Right cardiac atrium (tissue), 5 donors: ENCODE measurements at regions of chr5 and their contacts with region 1.

Region 1: DNA sequence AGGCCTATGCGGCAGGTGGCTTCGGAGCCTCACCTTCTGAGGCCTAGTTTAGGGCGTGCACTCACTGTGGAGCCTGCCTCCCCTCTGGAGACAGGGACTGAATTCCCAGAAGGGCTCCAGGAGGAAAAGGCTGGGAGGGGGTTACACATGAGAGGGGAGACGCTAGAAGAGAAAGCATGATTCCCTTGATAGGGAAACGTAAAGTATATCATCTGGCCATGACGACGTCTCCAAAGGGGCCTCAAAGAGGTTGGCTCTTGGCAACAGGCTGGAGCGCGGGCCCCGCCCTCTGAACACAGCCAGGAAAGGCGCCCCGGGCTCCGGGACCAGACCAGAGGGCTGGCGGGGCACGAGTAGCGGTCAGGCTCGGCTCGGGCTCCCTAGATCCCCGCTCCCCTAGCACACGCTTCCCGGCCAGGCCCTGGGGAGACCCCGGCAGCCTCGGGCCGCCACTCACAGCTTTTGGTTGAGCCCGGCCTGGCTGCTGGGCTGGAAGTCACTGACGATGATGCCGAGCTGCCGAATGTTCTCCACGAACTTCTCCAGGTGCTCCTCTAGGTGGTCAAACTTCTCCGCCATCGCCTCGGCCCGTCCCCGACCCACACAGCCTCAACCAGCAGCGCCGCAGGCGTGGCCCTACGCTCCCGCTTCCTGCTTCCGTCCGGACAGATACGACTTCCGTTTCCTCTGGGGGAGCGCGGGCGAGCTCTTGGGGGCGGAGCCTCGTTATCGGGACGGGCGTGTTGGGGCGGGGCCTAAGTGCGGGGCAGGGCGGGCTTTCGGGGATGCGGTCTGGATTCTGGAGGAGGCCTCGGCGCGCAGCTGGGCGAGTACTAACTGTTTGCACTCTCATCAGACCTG is at the start of gene MED10:
- DNase-seq: peak; percentile 97 to 98 (median 98)
- ATAC-seq: peak; percentile 100
- H3K4me3 ChIP-seq: peak within 1 kb of the TSS; percentile 72
- H3K27ac ChIP-seq: peak within 1 kb of the TSS; percentile 69
- H3K4me1 ChIP-seq: peaks cover 4% of the 10 kb centered on the region
- H3K27me3 ChIP-seq: no peaks in the 10 kb centered on the region
- total RNA-seq, gene MED10: 20.0 to 25.1 (median 22.7) TPM

Region 2: DNA sequence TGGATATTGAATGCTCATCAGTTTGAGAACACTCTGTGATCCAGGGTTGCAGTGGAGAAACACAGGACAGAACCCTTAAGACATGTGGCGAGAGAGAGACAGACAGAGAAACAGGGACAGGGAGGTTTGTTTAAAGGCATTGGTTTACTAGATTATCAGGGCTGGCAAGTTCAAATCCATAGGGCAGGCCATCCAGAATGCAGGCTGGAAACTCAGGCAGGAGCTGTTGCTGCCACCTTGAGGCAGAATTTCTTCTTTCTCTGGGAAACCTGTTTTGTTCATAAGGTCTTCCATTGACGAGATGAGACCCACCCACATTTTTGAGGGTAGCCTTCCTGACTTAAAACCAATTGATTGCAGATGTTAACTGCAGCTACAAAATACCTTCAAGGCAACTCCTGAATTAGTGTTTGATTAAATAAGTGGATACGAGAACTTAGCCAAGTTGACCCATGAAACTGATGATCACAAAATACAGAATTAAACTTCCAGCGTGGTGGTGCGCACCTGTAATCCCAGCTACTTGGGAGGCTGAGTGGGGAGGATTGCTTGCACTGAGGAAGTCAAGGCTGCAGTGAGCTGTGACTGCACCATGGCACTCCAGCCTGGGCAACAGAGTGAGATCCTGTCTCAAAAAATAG is 198.8 kb after region 1 on chr5:
- intact Hi-C with region 1: loop called in 1 of 4 experiments (anchors 5 kb)
- DNase-seq: no peak
- ATAC-seq: peak; percentile 34 to 46
- H3K4me3 ChIP-seq: no peak overlapping the region
- H3K27ac ChIP-seq: no peak overlapping the region
- H3K4me1 ChIP-seq: no peaks in the 10 kb centered on the region
- H3K27me3 ChIP-seq: no peaks in the 10 kb centered on the region